RWPE1 (cell line): ENCODE measurements at regions of chr1 and their contacts with region 1.

Region 1: GRCh38 chr1:27341525-27342252 is at the start of gene SYTL1:
- DNase-seq: peak; percentile 84
- H3K27ac ChIP-seq: peak within 1 kb of the TSS; percentile 98
- CTCF ChIP-seq: no peak

Region 2: GRCh38 chr1:26472901-26473845 is 868.5 kb before region 1 on chr1:
- CTCF ChIA-PET with region 1: no interaction called
- POLR2A ChIA-PET with region 1: interaction called, 10 read pairs
- DNase-seq: peak; percentile 94
- H3K27ac ChIP-seq: peak overlapping the region; percentile 98
- CTCF ChIP-seq: no peak

Region 3: GRCh38 chr1:27357281-27358037 is 15.8 kb after region 1 on chr1:
- CTCF ChIA-PET with region 1: interaction called, 14 read pairs
- POLR2A ChIA-PET with region 1: no interaction called
- DNase-seq: peak; percentile 77
- H3K27ac ChIP-seq: peak overlapping the region; percentile 98
- CTCF ChIP-seq: peak; percentile 92

Region 4: GRCh38 chr1:27365372-27366112 is 23.9 kb after region 1 on chr1:
- CTCF ChIA-PET with region 1: interaction called, 5 read pairs
- POLR2A ChIA-PET with region 1: interaction called, 11 read pairs
- DNase-seq: peak; percentile 90
- H3K27ac ChIP-seq: peak overlapping the region; percentile 100
- CTCF ChIP-seq: no peak